Endothelial cell of umbilical vein (primary cell): ENCODE measurements at regions of chr1 and their contacts with region 1.

Region 1: GRCh38 chr1:27111626-27112573 is 43.0 kb downstream of the SLC9A1 start:
- DNase-seq: peak; percentile 99
- H3K4me3 ChIP-seq: no peak overlapping the region
- H3K27ac ChIP-seq: peak overlapping the region; percentile 78
- H3K4me1 ChIP-seq: peaks cover 34% of the 10 kb centered on the region
- H3K27me3 ChIP-seq: no peaks in the 10 kb centered on the region
- CTCF ChIP-seq: peak; percentile 29 to 33
- POLR2A ChIP-seq: no peak

Region 2: DNA sequence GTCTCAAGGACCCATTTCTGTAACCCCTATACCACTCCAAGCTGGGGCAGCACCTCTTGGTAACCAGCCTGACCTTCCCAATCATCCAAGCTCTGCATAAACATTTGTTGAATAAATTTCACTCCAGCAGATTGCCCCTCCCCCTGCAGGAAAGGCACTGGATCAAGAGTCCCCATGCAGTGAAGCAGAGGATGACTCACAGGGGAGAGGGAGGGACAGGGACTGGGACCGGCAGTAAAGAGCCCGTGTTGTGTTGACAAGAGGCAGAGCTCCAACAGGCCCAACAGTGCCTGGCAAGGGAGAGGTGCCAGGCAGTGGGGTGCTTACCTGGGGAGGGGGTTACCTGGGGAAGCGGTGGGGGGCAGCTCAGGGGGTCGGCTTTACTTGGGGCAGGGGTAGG is 10.8 kb after region 1 on chr1:
- CTCF ChIA-PET with region 1: interaction called, 17 read pairs
- POLR2A ChIA-PET with region 1: interaction called, 7 read pairs
- dilution Hi-C with region 1: no loop called
- intact Hi-C with region 1: loop called (anchors 1 kb)
- DNase-seq: peak; percentile 83
- H3K4me3 ChIP-seq: no peak overlapping the region
- H3K27ac ChIP-seq: peak overlapping the region; percentile 14
- H3K4me1 ChIP-seq: peaks cover 22% of the 10 kb centered on the region
- H3K27me3 ChIP-seq: no peaks in the 10 kb centered on the region
- CTCF ChIP-seq: no peak
- POLR2A ChIP-seq: no peak

Region 3: GRCh38 chr1:27234049-27234882 is 122.4 kb after region 1 on chr1 and contains the start of gene WDTC1:
- CTCF ChIA-PET with region 1: no interaction called
- POLR2A ChIA-PET with region 1: interaction called, 4 read pairs
- dilution Hi-C with region 1: no loop called
- intact Hi-C with region 1: loop called (anchors 1 kb)
- DNase-seq: peak; percentile 98
- H3K4me3 ChIP-seq: peak within 1 kb of the TSS; percentile 61 to 87 (median 76)
- H3K27ac ChIP-seq: no peak within 1 kb of the TSS
- H3K4me1 ChIP-seq: peaks cover 12% of the 10 kb centered on the region
- H3K27me3 ChIP-seq: no peaks in the 10 kb centered on the region
- CTCF ChIP-seq: no peak
- POLR2A ChIP-seq: peak; percentile 28
- total RNA-seq, gene WDTC1: 27.3 and 27.6 TPM in 2 replicates

Region 4: GRCh38 chr1:27284425-27285273 is 172.7 kb after region 1 on chr1:
- CTCF ChIA-PET with region 1: interaction called, 11 read pairs
- POLR2A ChIA-PET with region 1: no interaction called
- dilution Hi-C with region 1: no loop called
- intact Hi-C with region 1: no loop called
- DNase-seq: peak; percentile 74
- H3K4me3 ChIP-seq: no peak overlapping the region
- H3K27ac ChIP-seq: no peak overlapping the region
- H3K4me1 ChIP-seq: no peaks in the 10 kb centered on the region
- H3K27me3 ChIP-seq: no peaks in the 10 kb centered on the region
- CTCF ChIP-seq: peak; percentile 76 to 85
- POLR2A ChIP-seq: no peak

Region 5: DNA sequence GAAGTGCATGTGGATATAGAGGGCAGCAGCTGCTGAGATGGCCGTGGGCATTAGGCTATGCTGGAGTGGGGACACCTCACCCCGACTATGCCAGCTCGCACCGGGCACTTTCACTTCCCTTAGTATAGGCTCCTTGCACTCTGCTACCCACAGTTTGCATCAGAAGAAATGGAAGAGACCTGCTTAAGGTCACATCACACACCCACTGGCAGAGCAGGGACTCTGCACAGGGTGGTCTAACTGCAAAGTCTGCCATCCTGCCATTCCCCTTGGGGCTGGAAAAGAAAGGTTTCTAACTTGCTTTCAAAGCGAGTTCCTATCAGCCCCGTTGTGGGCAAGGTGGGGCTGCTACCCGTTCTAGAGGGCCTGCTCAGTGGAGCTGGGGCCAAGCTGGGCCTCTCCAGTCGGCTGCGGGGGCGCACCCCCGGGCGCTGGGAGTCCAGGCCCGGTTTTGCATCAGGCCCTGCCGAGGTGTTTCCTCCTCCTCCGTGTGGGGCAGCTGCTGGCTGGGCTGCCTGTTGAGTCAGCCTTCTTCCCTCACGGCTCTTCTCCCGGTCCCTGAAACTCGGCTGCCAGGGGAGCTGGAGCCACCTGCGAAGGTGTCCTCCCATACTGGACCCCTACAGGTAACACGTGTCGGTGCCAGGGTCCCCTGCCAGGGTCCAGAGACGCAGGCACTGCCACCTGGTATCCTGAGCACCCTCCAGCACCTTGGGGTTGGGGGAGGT is 229.8 kb after region 1 on chr1 and contains the start of gene SYTL1:
- CTCF ChIA-PET with region 1: no interaction called
- POLR2A ChIA-PET with region 1: no interaction called
- dilution Hi-C with region 1: no loop called
- intact Hi-C with region 1: no loop called
- DNase-seq: no peak
- H3K4me3 ChIP-seq: no peak within 1 kb of the TSS
- H3K27ac ChIP-seq: no peak within 1 kb of the TSS
- H3K4me1 ChIP-seq: no peaks in the 10 kb centered on the region
- H3K27me3 ChIP-seq: no peaks in the 10 kb centered on the region
- CTCF ChIP-seq: no peak
- POLR2A ChIP-seq: no peak
- total RNA-seq, gene SYTL1: not detected in 2 replicates

Region 6: DNA sequence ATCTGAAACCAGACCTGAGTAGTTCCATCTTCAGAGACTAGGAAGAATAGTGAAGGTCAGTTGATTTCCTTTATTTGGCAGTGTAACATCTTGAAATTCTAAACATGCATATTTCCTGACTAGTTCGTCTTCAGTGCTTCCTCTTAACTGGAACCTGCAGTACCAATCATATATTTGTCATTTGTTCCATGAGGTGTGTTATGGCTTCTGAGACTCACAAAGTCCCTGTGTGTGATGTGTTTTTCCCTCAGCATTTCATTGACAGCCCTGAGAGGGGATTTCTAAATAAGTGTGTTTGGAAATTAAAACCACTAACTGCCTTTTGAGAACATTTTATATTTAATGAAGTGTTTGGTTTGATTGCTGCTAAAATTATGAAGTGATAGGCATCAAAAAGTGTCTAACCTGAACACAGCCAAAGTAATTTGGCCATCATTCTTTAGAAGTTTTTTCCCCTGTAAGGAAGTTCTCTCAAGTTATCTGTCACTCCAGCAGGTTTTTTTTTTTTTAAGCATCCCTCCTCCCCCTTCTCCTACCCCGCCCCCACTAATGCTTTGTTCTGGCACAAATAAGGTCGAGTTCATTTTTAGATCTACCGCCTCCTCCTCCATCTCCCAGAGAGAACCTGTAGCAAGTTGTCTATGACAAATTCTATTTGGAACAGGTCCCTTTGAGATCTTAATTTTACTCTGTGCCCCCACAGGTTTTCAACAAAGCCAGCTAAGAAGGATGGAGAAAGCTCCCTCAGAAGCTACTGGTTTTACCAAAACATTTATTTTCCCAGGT is 1950.5 kb after region 1 on chr1:
- CTCF ChIA-PET with region 1: no interaction called
- POLR2A ChIA-PET with region 1: no interaction called
- dilution Hi-C with region 1: no loop called
- intact Hi-C with region 1: no loop called
- DNase-seq: no peak
- H3K4me3 ChIP-seq: no peak overlapping the region
- H3K27ac ChIP-seq: no peak overlapping the region
- H3K4me1 ChIP-seq: no peaks in the 10 kb centered on the region
- H3K27me3 ChIP-seq: no peaks in the 10 kb centered on the region
- CTCF ChIP-seq: no peak
- POLR2A ChIP-seq: no peak